ENCODE measurements at regions of chr12 and their contacts with region 1.

Region 1: GRCh38 chr12:98743347-98743953 is 98.4 kb downstream of the APAF1 start:
- DNase-seq: peak; percentile 83
- H3K4me3 Mint-ChIP-seq: peak overlapping the region; percentile 68
- H3K27ac Mint-ChIP-seq: peak overlapping the region; percentile 97
- H3K4me1 Mint-ChIP-seq: peaks cover 52% of the 10 kb centered on the region
- H3K27me3 Mint-ChIP-seq: peaks cover 11% of the 10 kb centered on the region

Region 2: DNA sequence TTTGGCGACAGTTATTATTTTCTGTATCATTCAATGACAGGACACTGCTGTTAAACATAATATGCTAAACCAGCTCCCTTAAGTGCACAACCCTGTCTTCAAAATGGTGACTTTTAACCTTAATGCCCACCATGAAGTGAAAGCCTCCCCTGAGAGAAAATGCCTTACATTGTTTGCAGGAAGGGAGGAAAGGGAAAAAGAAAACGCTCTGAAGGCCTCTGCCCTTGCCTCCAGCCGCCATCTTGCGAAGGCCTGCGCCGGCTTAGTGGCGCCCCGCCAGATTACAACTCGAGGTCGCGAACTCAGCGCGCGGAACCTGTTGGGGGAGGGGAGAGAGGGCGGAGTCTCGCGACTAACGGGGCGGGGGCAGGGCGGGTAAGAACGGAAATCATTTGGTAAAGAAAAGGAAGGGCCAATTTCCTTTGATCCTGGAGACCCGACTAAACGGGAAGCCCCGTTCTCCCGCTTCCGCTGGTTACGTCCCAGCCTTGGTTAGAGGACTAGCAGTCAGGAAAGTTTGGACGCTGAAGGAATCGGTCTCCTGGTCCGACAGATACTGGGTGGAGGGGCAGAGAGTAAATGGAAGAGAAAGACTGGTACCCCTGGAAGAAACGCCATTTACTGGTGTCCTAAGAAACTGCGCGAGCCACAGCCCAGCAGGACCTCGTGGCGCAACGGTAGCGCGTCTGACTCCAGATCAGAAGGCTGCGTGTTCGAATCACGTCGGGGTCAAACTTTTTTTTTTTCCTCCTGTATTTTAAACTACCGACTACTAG is 239.7 kb before region 1 on chr12:
- intact Hi-C with region 1: loop called (anchors 5 kb)
- DNase-seq: peak; percentile 97
- H3K4me3 Mint-ChIP-seq: peak overlapping the region; percentile 92
- H3K27ac Mint-ChIP-seq: peak overlapping the region; percentile 99
- H3K4me1 Mint-ChIP-seq: peaks cover 26% of the 10 kb centered on the region
- H3K27me3 Mint-ChIP-seq: peaks cover 7% of the 10 kb centered on the region

Region 3: DNA sequence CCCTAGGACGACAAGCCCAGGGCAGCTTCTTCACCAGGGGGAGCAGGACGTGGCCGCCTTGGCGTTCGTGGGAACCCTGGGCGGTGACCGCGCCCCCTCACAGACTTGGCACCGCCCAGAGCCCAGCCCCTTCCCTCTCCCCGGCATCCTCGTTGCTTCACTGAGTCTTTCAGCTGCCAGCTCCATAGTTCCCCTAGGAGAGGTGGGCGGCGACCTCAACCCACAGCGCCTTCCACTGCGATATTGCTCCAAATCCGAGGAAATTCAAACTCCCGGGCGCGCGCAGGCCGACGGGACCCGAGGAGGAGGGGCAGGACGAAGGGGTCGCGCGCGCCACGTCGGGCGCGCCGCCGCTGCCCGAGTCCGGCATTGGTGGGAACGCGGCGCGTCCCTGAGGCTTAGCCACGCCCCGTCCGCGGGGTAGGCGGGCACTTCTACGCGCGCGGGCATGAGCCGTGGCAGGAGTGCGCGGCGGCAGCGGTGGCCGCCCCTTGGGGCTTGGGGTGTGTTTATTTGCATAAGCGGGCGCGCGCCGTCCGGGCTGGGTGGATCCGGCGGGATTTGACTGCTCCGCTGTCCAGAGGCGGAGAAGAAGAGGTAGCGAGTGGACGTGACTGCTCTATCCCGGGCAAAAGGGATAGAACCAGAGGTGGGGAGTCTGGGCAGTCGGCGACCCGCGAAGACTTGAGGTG is 98.6 kb before region 1 on chr12 and contains the starts of genes APAF1 and IKBIP:
- intact Hi-C with region 1: loop called (anchors 1 kb)
- DNase-seq: peak; percentile 99
- H3K4me3 Mint-ChIP-seq: peak within 1 kb of the TSS; percentile 92
- H3K27ac Mint-ChIP-seq: peak within 1 kb of the TSS; percentile 95
- H3K4me1 Mint-ChIP-seq: peaks cover 21% of the 10 kb centered on the region
- H3K27me3 Mint-ChIP-seq: no peaks in the 10 kb centered on the region
- total RNA-seq, gene APAF1: 19.9 and 20.7 TPM in 2 replicates
- total RNA-seq, gene IKBIP: 35.0 and 36.9 TPM in 2 replicates

Region 4: GRCh38 chr12:98698603-98699463 is 44.6 kb before region 1 on chr12:
- intact Hi-C with region 1: loop called (anchors 1 kb)
- DNase-seq: peak; percentile 83
- H3K4me3 Mint-ChIP-seq: no peak overlapping the region
- H3K27ac Mint-ChIP-seq: peak overlapping the region; percentile 25
- H3K4me1 Mint-ChIP-seq: peaks cover 10% of the 10 kb centered on the region
- H3K27me3 Mint-ChIP-seq: no peaks in the 10 kb centered on the region

Region 5: DNA sequence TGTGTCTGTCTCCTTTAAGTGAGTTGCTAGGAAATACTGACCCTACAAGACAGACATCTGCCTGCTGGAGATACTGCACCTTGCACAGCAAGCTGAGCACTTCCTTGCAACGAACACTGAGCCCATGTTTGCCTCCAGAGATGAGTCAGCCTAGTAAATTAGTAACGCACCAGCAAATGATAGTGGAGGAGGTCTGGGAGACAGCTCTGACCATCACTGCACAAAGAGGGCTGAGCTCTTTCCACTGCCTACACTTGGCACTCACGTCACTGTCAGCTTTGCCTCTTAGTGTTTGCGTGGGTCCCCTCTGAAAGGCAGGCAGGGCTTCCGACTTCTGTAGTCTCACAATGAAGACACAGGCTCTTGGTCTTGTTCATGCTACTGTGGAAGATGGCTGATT is 10.6 kb after region 1 on chr12:
- intact Hi-C with region 1: loop called (anchors 1 kb)
- DNase-seq: peak; percentile 75
- H3K4me3 Mint-ChIP-seq: peak overlapping the region; percentile 31
- H3K27ac Mint-ChIP-seq: peak overlapping the region; percentile 78
- H3K4me1 Mint-ChIP-seq: peaks cover 19% of the 10 kb centered on the region
- H3K27me3 Mint-ChIP-seq: no peaks in the 10 kb centered on the region